ENCODE measurements at regions of chr22 and their contacts with region 1.

Region 1: GRCh38 chr22:20238536-20238900 is 29.6 kb downstream of the RTN4R start:
- DNase-seq: peak; percentile 89
- ATAC-seq: peak; percentile 91
- H3K4me3 Mint-ChIP-seq: no peak overlapping the region
- H3K27ac Mint-ChIP-seq: no peak overlapping the region
- H3K4me1 Mint-ChIP-seq: peaks cover 16% of the 10 kb centered on the region
- H3K27me3 Mint-ChIP-seq: no peaks in the 10 kb centered on the region
- CTCF ChIP-seq: peak; percentile 58; the same call in 1 of the 2 replicates

Region 2: GRCh38 chr22:20137671-20138416 is 100.7 kb before region 1 on chr22:
- CTCF ChIA-PET with region 1: interaction called, 10 read pairs
- POLR2A ChIA-PET with region 1: no interaction called
- DNase-seq: no peak
- ATAC-seq: no peak
- H3K4me3 Mint-ChIP-seq: no peak overlapping the region
- H3K27ac Mint-ChIP-seq: peak overlapping the region; percentile 68
- H3K4me1 Mint-ChIP-seq: 0 out of 2 replicates have a peak, but pooled peaks cover 2% of the 10 kb centered on the region
- H3K27me3 Mint-ChIP-seq: no peaks in the 10 kb centered on the region
- CTCF ChIP-seq: no peak

Region 3: GRCh38 chr22:20174785-20175596 is 63.5 kb before region 1 on chr22:
- CTCF ChIA-PET with region 1: interaction called, 44 read pairs
- POLR2A ChIA-PET with region 1: no interaction called
- DNase-seq: no peak
- ATAC-seq: peak; percentile 67
- H3K4me3 Mint-ChIP-seq: no peak overlapping the region
- H3K27ac Mint-ChIP-seq: no peak overlapping the region
- H3K4me1 Mint-ChIP-seq: no peaks in the 10 kb centered on the region
- H3K27me3 Mint-ChIP-seq: no peaks in the 10 kb centered on the region
- CTCF ChIP-seq: no peak

Region 4: DNA sequence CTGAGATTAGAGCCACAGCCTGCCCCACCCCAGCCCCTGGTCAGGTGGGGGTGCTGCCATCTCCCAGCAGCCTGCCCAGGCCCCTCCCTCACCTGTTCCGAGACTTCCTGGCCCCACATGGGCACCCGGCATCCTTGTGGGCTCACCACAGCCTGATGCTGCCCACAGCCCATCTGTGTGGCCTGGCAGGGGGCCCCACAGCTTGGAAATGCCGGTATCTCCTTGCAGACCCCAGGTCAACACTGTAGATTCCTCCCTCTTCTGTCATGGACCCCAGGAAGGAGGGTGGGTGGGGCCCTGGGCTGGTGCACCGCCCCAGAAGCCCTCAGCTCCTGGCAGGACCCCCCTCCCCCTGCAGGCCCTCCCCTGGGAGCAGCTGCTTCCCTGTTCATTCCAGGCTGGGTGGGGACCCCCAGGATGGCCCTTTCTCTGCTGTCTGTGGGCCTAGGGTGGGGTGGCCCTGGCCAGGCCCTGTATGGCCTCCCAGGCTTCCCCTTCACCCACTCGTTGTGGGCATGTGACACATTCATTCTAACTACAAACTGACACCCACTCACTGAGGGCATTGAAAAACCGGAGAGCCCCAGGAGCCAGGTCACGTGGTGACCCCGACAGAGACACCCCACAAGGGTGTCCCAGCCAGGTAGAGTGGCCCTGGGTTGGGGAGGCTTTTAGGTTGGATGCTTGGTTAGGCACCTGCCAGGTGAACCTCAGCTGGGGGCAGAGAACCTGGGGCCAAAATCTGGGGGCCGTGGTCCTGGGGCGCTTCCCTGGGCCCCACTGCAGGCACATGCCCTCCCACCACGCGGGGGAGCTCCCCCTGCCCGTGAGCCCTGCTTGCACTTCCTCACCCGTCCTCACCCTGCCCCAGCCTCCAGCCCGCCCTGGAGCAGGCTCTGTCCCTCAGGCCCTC is 43.6 kb before region 1 on chr22:
- CTCF ChIA-PET with region 1: interaction called, 13 read pairs
- POLR2A ChIA-PET with region 1: no interaction called
- DNase-seq: no peak
- ATAC-seq: peak; percentile 60; the same call in 1 of the 2 replicates
- H3K4me3 Mint-ChIP-seq: no peak overlapping the region
- H3K27ac Mint-ChIP-seq: no peak overlapping the region
- H3K4me1 Mint-ChIP-seq: no peaks in the 10 kb centered on the region
- H3K27me3 Mint-ChIP-seq: no peaks in the 10 kb centered on the region
- CTCF ChIP-seq: no peak

Region 5: DNA sequence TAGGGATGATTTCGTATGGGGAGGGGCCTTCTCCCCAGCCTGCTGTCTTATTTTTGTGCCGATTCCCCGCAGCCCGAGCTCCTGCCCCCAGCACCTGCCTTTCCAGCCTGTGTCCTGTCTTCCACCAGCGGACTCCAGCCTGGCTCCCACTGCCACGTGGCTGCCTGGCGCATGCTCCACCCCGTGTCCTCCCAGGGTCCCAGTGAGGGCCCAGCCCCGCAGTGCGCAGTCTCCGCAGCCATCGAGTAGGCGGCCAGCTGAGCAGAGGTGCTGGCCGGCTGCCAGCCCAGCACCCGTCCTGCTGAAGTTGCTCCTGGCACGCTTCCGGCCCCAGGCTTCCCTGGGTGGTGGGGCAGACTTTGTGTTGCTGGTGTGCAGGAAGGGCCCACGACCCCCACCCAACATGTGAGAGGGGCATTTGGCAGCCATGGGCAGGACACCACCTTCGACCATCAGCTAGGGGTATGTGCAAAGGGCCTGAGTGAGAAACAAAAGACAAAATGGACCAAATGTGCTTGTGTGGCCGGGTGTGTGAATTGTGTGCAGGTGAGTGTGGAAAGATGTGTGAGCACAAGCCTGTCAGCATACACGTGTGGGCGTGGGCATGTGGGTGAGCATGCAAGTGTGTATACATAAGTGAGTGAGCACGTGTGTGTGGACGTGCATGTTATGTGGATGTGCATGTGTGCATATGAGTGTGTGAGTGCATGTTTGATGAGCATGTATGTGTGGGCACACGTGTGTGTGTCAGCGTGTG is 26.3 kb before region 1 on chr22:
- CTCF ChIA-PET with region 1: interaction called, 39 read pairs
- POLR2A ChIA-PET with region 1: no interaction called
- DNase-seq: no peak
- ATAC-seq: no peak
- H3K4me3 Mint-ChIP-seq: no peak overlapping the region
- H3K27ac Mint-ChIP-seq: no peak overlapping the region
- H3K4me1 Mint-ChIP-seq: no peaks in the 10 kb centered on the region
- H3K27me3 Mint-ChIP-seq: no peaks in the 10 kb centered on the region
- CTCF ChIP-seq: no peak

Region 6: DNA sequence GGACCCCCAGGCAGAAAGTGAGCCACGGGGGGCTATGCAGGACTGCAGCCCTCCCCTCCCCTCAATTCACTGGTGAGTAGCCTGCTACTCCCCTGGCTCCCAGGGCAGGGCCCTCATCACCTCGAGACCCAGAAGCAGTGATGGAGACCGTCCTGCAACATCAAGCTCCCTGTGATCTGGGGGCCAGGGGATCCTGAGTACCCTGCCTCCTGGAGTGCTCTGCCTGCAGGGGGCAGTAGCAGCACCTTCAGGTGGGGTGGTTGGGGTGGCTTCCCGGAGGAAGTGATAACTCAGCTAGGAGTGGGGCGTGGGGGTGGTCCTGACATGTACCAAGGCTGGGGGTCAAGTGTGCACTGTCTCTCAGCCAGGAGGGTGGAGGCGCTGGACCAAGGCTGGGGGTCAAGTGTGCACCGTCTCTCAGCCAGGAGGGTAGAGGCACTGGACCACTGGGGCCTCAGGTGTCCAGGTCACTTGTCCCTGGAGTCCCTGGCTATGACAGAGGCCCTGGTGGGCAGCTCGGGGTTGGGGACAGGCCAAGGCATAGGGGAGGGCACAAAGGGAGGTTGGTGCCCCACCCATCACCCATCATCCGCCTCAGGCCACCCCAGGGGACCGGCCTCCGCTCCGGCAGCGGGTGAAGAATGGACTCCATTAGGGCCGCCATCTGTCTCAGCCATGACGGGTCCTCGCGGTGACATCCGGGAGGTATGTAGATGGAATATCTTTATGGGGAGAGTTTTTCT is 20.2 kb after region 1 on chr22:
- CTCF ChIA-PET with region 1: interaction called, 34 read pairs
- POLR2A ChIA-PET with region 1: no interaction called
- DNase-seq: peak; percentile 49
- ATAC-seq: no peak; the same call in 1 of the 2 replicates
- H3K4me3 Mint-ChIP-seq: no peak overlapping the region
- H3K27ac Mint-ChIP-seq: no peak overlapping the region
- H3K4me1 Mint-ChIP-seq: no peaks in the 10 kb centered on the region
- H3K27me3 Mint-ChIP-seq: no peaks in the 10 kb centered on the region
- CTCF ChIP-seq: peak; percentile 32; the same call in 1 of the 2 replicates

Region 7: GRCh38 chr22:20292673-20293232 is 54.2 kb after region 1 on chr22:
- CTCF ChIA-PET with region 1: interaction called, 15 read pairs
- POLR2A ChIA-PET with region 1: interaction called, 3 read pairs
- DNase-seq: no peak
- ATAC-seq: no peak
- H3K4me3 Mint-ChIP-seq: no peak overlapping the region
- H3K27ac Mint-ChIP-seq: no peak overlapping the region
- H3K4me1 Mint-ChIP-seq: no peaks in the 10 kb centered on the region
- H3K27me3 Mint-ChIP-seq: peaks cover 15% of the 10 kb centered on the region
- CTCF ChIP-seq: no peak

Region 8: GRCh38 chr22:20606041-20606783 is 367.7 kb after region 1 on chr22:
- CTCF ChIA-PET with region 1: no interaction called
- POLR2A ChIA-PET with region 1: no interaction called
- DNase-seq: peak; percentile 88
- ATAC-seq: peak; percentile 93
- H3K4me3 Mint-ChIP-seq: no peak overlapping the region
- H3K27ac Mint-ChIP-seq: no peak overlapping the region
- H3K4me1 Mint-ChIP-seq: peaks cover 12% of the 10 kb centered on the region
- H3K27me3 Mint-ChIP-seq: no peaks in the 10 kb centered on the region
- CTCF ChIP-seq: peak; percentile 56; the same call in 1 of the 2 replicates

Measured in WTC11 (cell line).